ENCODE measurements at regions of chr19 and their contacts with region 1.

Region 1: DNA sequence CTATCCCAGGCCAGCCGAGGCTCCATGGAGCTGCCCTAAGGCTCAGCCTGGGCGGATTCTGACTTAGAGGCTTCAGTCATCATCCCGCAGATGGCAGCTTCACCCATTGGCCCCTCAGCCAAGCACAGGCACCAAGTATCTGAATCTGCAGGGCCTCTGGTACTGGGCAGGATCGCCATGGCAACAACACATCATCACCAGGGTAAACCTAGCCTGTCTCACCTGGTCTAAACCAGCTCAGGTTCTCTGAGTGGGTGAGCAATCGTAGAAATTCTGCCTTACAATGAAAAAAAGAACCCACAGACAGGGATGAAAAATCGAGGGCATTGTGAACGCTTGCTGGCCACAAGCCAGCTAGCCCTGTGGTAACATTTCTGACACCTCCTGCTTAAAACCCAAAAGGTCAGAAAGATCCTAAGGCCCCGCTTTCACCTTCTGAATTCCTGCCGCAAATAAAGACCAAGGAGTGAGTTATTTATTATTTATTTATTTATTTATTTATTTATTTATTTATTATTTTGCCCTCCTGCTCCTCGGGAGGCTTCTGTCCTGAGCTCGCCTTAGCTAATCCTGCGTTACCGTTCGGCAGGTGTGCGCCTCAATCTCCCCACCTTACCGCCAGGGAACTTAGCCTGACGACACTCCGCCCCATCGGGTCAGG is 12.0 kb upstream of the CEACAM21 start:
- H3K4me3 ChIP-seq: no peak overlapping the region
- H3K27ac ChIP-seq: no peak overlapping the region
- H3K4me1 ChIP-seq: peaks cover 3% of the 10 kb centered on the region
- CTCF ChIP-seq: no peak

Region 2: DNA sequence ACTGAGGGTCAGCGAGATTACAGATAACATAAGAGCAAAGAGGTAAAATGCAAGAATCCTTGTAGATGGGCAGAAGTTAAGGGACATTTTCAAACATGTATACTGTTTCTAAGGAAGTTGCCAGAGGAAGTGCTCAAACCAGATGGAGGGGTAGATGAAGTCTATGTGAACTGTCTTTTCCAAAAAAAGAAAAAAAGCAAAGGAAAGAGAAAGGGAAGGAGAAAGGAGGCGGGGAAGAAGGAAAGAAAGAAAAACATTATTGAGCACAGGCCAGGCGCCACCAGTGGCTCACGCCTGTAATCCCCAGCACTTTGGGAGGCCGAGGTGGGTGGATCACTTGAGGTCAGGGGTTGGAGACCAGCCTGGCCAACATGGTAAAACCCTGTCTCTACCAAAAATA is 129.5 kb before region 1 on chr19:
- CTCF ChIA-PET with region 1: interaction called, 17 read pairs
- POLR2A ChIA-PET with region 1: interaction called, 5 read pairs
- H3K4me3 ChIP-seq: no peak overlapping the region
- H3K27ac ChIP-seq: no peak overlapping the region
- H3K4me1 ChIP-seq: peaks cover 4% of the 10 kb centered on the region; the same call in 1 of the 2 replicates
- CTCF ChIP-seq: no peak

Region 3: DNA sequence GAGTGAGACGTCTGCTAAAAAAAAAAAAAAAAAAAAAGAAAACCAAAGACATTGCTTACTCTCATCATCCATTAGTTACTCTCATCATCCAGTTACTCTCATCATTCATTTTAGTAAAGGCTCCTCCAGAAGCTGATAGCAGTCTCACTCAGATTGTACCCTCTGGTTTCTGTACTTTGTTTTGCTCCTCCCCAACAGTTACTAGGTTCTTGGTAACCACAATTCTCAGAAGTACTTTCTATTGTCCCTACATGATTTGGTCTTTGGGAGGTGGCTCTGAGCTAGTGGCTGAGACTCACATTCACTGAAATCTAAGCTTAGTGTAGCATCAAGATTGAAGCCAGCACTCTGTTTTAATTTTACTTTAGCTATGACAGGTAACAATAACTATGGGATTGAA is 106.7 kb before region 1 on chr19:
- CTCF ChIA-PET with region 1: interaction called, 433 read pairs
- POLR2A ChIA-PET with region 1: no interaction called
- H3K4me3 ChIP-seq: no peak overlapping the region
- H3K27ac ChIP-seq: no peak overlapping the region
- H3K4me1 ChIP-seq: no peaks in the 10 kb centered on the region
- CTCF ChIP-seq: no peak

Region 4: GRCh38 chr19:41505105-41505504 is 58.9 kb before region 1 on chr19:
- CTCF ChIA-PET with region 1: no interaction called
- POLR2A ChIA-PET with region 1: no interaction called
- H3K4me3 ChIP-seq: no peak overlapping the region
- H3K27ac ChIP-seq: no peak overlapping the region
- H3K4me1 ChIP-seq: peaks cover 14% of the 10 kb centered on the region
- CTCF ChIP-seq: no peak

Region 5: DNA sequence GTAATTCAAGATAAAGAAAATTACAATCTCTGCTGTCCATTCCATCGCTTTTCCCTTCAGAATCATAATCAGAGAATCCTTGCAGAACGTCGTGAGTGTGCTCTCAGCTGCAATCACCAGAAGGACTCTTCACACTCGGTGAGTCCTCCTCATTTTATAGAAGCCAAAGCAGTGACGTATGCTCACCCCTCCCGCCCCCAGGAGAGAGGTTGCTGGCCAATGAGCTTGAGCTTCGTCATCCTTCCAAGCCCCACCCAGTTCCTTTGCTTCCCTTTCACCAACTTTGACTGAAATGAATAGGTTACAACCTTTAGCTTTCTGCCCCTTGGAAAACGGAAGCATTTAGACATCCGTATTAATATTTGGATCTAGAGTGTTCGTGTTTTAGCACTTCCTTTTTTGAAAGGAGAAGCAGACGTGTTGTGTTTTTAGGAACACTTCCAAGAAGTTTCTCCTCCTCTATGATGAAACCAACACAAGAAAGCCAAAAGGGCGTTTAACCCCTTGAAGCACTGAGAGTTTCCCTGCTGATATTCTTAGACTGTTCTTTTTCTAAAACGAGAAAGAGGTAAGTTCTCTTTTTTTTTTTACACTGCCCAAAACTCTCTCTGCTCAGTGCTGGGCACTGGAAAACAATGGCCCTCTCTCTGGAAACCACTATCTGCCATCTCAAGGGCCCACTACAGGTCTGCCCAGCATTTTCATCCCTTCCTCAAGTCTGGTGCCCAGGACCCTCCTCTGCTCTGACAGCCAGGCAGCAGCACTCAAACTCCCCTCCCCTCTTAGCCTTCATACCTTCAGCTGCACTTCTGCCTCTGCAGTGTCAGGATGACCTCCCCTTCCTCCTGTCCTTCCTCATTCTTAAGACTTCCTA is 32.3 kb before region 1 on chr19:
- CTCF ChIA-PET with region 1: interaction called, 12 read pairs
- POLR2A ChIA-PET with region 1: no interaction called
- H3K4me3 ChIP-seq: no peak overlapping the region
- H3K27ac ChIP-seq: peak overlapping the region; percentile 1; the same call in 1 of the 2 replicates
- H3K4me1 ChIP-seq: peaks cover 7% of the 10 kb centered on the region
- CTCF ChIP-seq: no peak

Region 6: GRCh38 chr19:41541990-41542584 is 21.9 kb before region 1 on chr19:
- CTCF ChIA-PET with region 1: interaction called, 37 read pairs
- POLR2A ChIA-PET with region 1: no interaction called
- H3K4me3 ChIP-seq: no peak overlapping the region
- H3K27ac ChIP-seq: no peak overlapping the region
- H3K4me1 ChIP-seq: no peaks in the 10 kb centered on the region
- CTCF ChIP-seq: 0 out of 2 replicates have a peak, but pooled peaks have one; percentile 25

Region 7: DNA sequence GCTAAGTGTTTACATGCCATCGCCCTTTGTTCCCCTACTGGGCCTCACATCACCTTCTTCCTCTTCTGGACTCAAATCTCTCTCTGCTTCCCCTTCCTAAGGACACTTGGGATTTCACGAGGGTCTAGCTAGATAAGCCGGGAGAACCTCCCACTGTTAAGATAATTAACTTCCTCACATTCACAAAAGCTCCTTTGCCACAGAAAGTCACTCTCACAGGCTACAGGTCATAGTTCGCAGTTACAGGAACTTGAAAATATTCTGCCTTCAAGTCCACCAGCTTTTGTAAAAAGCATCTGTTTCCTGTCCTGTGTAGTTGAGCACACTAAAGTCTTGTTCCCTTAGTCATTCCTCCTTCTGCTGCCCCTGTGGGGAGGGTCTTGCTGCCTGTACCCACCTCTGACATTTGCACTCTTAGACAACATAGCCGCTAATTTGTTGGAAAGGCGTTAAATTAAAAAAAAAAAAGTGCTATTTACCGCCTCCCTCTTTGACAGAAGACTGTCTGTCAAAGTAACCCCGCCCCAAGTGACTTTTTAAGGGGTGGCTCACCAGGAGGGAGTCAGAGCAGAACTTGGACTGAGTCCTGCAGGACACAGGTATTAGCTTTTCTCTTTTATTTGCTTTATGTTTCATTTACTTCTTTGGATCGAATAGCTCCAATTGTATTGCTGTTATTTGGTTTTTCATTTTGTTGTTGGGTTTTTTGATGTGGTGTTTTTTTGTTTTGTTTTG is 14.9 kb before region 1 on chr19:
- CTCF ChIA-PET with region 1: interaction called, 138 read pairs
- POLR2A ChIA-PET with region 1: interaction called, 3 read pairs
- H3K4me3 ChIP-seq: no peak overlapping the region
- H3K27ac ChIP-seq: peak overlapping the region; percentile 21
- H3K4me1 ChIP-seq: peaks cover 17% of the 10 kb centered on the region
- CTCF ChIP-seq: no peak

Measured in HEK293 (cell line).